ENCODE measurements at regions of chr3 and their contacts with region 1.

Region 1: GRCh38 chr3:5026331-5027218 is 47.3 kb downstream of the BHLHE40 start:
- DNase-seq: peak; percentile 65
- H3K4me3 ChIP-seq: peak overlapping the region; percentile 50
- H3K27me3 ChIP-seq: no peaks in the 10 kb centered on the region
- CTCF ChIP-seq: peak; percentile 83

Region 2: DNA sequence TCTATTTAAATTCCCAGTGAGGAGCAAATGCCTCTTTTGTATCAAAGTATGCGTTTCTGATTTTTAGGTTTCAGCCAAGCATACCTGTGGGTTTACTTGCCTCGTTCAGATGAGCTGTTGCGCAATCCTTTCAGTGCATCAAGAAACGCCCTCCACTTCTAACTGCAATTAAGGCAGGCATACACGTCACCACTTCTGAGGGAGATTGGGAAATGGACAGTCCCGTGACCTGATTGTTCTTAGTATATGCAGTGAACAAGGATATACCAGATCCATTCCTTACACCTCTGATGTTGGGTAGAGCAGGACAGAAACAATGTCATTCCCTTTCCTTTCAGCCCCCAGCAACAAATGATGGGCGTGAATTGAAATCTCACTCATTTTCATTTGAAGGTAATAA is 314.4 kb before region 1 on chr3:
- CTCF ChIA-PET with region 1: interaction called, 98 read pairs
- POLR2A ChIA-PET with region 1: no interaction called
- DNase-seq: no peak
- H3K4me3 ChIP-seq: no peak overlapping the region
- H3K27me3 ChIP-seq: no peaks in the 10 kb centered on the region
- CTCF ChIP-seq: no peak

Region 3: GRCh38 chr3:4720279-4721075 is 306.1 kb before region 1 on chr3:
- CTCF ChIA-PET with region 1: interaction called, 14 read pairs
- POLR2A ChIA-PET with region 1: no interaction called
- DNase-seq: no peak
- H3K4me3 ChIP-seq: no peak overlapping the region
- H3K27me3 ChIP-seq: no peaks in the 10 kb centered on the region
- CTCF ChIP-seq: peak; percentile 27

Region 4: GRCh38 chr3:4978204-4978965 is 48.2 kb before region 1 on chr3:
- CTCF ChIA-PET with region 1: interaction called, 63 read pairs
- POLR2A ChIA-PET with region 1: no interaction called
- DNase-seq: peak; percentile 90
- H3K4me3 ChIP-seq: peak overlapping the region; percentile 72
- H3K27me3 ChIP-seq: no peaks in the 10 kb centered on the region
- CTCF ChIP-seq: no peak

Region 5: DNA sequence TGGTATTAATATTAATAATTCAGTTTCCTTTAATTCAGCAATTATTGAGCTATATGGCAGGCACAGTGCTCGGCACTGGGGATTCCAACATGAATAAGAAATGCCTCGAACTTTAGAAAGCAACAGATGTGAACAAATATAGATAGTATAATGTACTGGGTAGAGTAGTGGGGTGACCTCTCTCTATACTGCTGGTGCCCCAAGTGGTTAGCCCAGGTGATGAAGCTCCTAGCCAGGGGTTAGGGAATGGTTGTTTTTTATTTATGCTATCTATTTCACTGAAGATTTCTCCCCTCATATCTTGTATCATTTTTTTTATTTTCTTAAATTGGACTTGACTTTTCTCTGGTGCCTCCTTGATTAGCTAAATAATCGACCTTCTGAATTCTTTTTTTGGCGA is 14.7 kb after region 1 on chr3:
- CTCF ChIA-PET with region 1: interaction called, 10 read pairs
- POLR2A ChIA-PET with region 1: no interaction called
- DNase-seq: no peak
- H3K4me3 ChIP-seq: no peak overlapping the region
- H3K27me3 ChIP-seq: peaks cover 2% of the 10 kb centered on the region; the same call in 1 of the 2 replicates
- CTCF ChIP-seq: no peak